ENCODE measurements at regions of chr6 and their contacts with region 1.

Region 1: GRCh38 chr6:36678518-36679027 is at the start of gene CDKN1A:
- DNase-seq: peak; percentile 87
- ATAC-seq: peak; percentile 87
- H3K4me3 ChIP-seq: peak within 1 kb of the TSS; percentile 73 to 99 (median 94)
- H3K27ac ChIP-seq: peak within 1 kb of the TSS; percentile 92
- H3K4me1 ChIP-seq: peaks cover 76% of the 10 kb centered on the region
- H3K27me3 ChIP-seq: peaks cover 0 to 6% of the 10 kb centered on the region in 2 experiments; a peak in 1 of 5 replicates
- CTCF ChIP-seq: peak; percentile 7; the same call in 1 of the 2 replicates
- EP300 ChIP-seq: peak; percentile 10 to 61; a peak in 3 of 4 replicates
- POLR2A ChIP-seq: peak in 1 of 2 experiments; percentile 98; a peak in 2 of 4 replicates
- RAD21 ChIP-seq: no peak; the same call in 1 of the 2 replicates
- total RNA-seq, gene CDKN1A: 56.0 and 60.7 TPM in 2 replicates

Region 2: GRCh38 chr6:36594029-36594815 is 84.4 kb before region 1 on chr6 and contains the start of gene SRSF3:
- CTCF ChIA-PET with region 1: no interaction called
- POLR2A ChIA-PET with region 1: interaction called, 10 read pairs
- in situ Hi-C with region 1: no loop called
- intact Hi-C with region 1: no loop called
- DNase-seq: peak; percentile 98
- ATAC-seq: peak; percentile 92
- H3K4me3 ChIP-seq: peak within 1 kb of the TSS; percentile 87 to 97 (median 92)
- H3K27ac ChIP-seq: peak within 1 kb of the TSS; percentile 93
- H3K4me1 ChIP-seq: peaks cover 50% of the 10 kb centered on the region
- H3K27me3 ChIP-seq: no peaks in the 10 kb centered on the region; a peak in 1 of 5 replicates
- CTCF ChIP-seq: peak; percentile 82
- EP300 ChIP-seq: peak in 1 of 2 experiments; percentile 56; a peak in 3 of 4 replicates
- POLR2A ChIP-seq: peak; percentile 100
- RAD21 ChIP-seq: peak; percentile 64
- total RNA-seq, gene SRSF3: 684 and 1,115 TPM in 2 replicates

Region 3: GRCh38 chr6:36623547-36624459 is 54.8 kb before region 1 on chr6:
- CTCF ChIA-PET with region 1: interaction called, 39 read pairs
- POLR2A ChIA-PET with region 1: interaction called, 32 read pairs
- in situ Hi-C with region 1: loop called (anchors 5 kb)
- intact Hi-C with region 1: loop called (anchors 1 kb)
- DNase-seq: peak; percentile 77
- ATAC-seq: peak; percentile 78
- H3K4me3 ChIP-seq: no peak overlapping the region; a peak in 2 of 6 replicates
- H3K27ac ChIP-seq: no peak overlapping the region
- H3K4me1 ChIP-seq: peaks cover 30% of the 10 kb centered on the region
- H3K27me3 ChIP-seq: peaks cover 0 to 29% of the 10 kb centered on the region in 2 experiments; a peak in 2 of 5 replicates
- CTCF ChIP-seq: peak; percentile 98
- EP300 ChIP-seq: peak in 1 of 2 experiments; percentile 17; a peak in 1 of 4 replicates
- POLR2A ChIP-seq: no peak
- RAD21 ChIP-seq: peak; percentile 97

Region 4: GRCh38 chr6:36642913-36643817 is 35.4 kb before region 1 on chr6:
- CTCF ChIA-PET with region 1: interaction called, 4 read pairs
- POLR2A ChIA-PET with region 1: interaction called, 109 read pairs
- in situ Hi-C with region 1: no loop called
- intact Hi-C with region 1: loop called (anchors 2 kb)
- DNase-seq: peak; percentile 88
- ATAC-seq: peak; percentile 97
- H3K4me3 ChIP-seq: peak overlapping the region; percentile 14 to 70 (median 39)
- H3K27ac ChIP-seq: peak overlapping the region; percentile 61
- H3K4me1 ChIP-seq: peaks cover 57% of the 10 kb centered on the region
- H3K27me3 ChIP-seq: 0 out of 5 replicates have a peak, but pooled peaks cover 0 to 6% of the 10 kb centered on the region in 2 experiments
- CTCF ChIP-seq: no peak; the same call in 1 of the 2 replicates
- EP300 ChIP-seq: no peak
- POLR2A ChIP-seq: 0 out of 4 replicates have a peak, but pooled peaks of 1 of the 2 experiments have one; percentile 25
- RAD21 ChIP-seq: no peak

Region 5: GRCh38 chr6:36666726-36667591 is 11.6 kb before region 1 on chr6:
- CTCF ChIA-PET with region 1: no interaction called
- POLR2A ChIA-PET with region 1: interaction called, 383 read pairs
- in situ Hi-C with region 1: no loop called
- intact Hi-C with region 1: no loop called
- DNase-seq: peak; percentile 93
- ATAC-seq: peak; percentile 90
- H3K4me3 ChIP-seq: no peak overlapping the region
- H3K27ac ChIP-seq: peak overlapping the region; percentile 77
- H3K4me1 ChIP-seq: peaks cover 89% of the 10 kb centered on the region
- H3K27me3 ChIP-seq: peaks cover 0 to 9% of the 10 kb centered on the region in 2 experiments; a peak in 2 of 5 replicates
- CTCF ChIP-seq: peak; percentile 55
- EP300 ChIP-seq: peak; percentile 36 to 80; a peak in 2 of 4 replicates
- POLR2A ChIP-seq: peak; percentile 43 to 66; a peak in 2 of 4 replicates
- RAD21 ChIP-seq: 0 out of 2 replicates have a peak, but pooled peaks have one; percentile 31

Region 6: DNA sequence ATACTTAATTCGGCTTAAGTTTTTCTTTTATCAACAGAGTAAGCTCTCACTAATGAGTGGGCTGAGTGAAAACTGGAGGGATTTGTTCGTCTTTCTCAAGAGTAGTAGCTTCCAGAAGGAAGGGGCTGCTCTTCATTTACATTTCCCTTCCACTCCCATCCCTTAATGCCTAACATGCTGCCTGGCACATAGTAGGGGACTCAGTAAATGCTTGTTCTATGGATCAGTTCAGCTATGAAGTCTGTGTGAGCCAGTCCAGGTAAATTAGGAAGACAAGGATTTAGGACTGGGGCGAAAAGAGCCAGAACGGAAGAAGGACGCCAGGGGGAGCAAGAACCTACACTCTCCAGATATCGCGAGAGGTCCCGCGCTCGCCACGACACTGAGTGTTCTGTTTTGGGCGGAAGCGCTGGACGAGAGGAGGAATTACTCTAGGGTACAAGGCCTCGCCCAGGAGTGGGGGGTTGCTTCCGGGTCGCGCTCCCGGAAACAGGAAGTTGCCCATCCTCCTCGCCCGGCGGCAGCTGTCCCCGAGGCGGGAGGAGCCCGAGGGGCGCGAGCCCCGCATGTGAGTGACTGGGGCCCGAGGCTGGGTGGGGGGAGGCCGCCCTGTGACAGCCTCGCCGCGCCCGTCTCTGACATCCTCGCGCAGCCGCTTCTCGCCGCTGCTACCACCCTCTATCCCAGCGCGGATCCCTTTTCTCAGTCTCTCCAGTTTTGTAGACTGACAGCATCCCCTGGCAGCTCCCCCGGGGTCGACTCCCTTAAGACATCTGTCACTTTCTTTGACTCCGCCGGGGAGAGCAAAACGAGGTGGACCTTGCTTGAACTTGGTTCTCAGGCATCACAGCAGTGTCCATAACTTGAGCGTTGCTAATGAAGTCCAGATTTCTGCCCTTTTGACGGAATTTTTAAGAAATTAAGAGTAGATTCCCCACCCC is 207.2 kb after region 1 on chr6 and contains the start of gene C6orf89:
- CTCF ChIA-PET with region 1: no interaction called
- POLR2A ChIA-PET with region 1: no interaction called
- in situ Hi-C with region 1: no loop called
- intact Hi-C with region 1: loop called (anchors 10 kb)
- DNase-seq: peak; percentile 99
- ATAC-seq: peak; percentile 99
- H3K4me3 ChIP-seq: peak within 1 kb of the TSS; percentile 77 to 82 (median 77)
- H3K27ac ChIP-seq: peak within 1 kb of the TSS; percentile 74
- H3K4me1 ChIP-seq: peaks cover 15% of the 10 kb centered on the region
- H3K27me3 ChIP-seq: no peaks in the 10 kb centered on the region; a peak in 2 of 5 replicates
- CTCF ChIP-seq: peak; percentile 98
- EP300 ChIP-seq: peak in 1 of 2 experiments; percentile 55; a peak in 2 of 4 replicates
- POLR2A ChIP-seq: peak; percentile 42 to 63; a peak in 3 of 4 replicates
- RAD21 ChIP-seq: peak; percentile 63; the same call in 1 of the 2 replicates
- total RNA-seq, gene C6orf89: 23.9 and 32.2 TPM in 2 replicates

Region 7: DNA sequence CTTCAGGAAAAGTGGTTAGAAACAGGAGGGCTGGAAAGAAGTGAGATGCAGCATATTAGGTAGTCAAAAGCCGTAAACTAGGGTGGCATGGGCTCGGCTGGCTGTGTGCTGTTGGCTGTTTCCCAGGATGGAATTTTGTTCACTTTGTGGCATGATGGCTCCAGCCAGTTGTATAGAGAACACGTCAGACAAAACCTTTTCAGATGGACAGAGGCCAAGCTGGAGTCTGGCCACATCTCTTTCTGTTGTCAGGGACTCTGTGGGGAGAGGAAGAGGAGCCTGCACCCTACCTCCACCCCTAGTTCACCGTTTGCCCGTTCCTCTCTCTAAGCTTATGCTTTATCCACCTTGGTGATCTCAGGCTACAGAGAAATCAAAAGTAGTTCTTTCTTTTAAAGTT is 229.2 kb after region 1 on chr6:
- CTCF ChIA-PET with region 1: no interaction called
- POLR2A ChIA-PET with region 1: no interaction called
- in situ Hi-C with region 1: no loop called
- intact Hi-C with region 1: no loop called
- DNase-seq: no peak
- ATAC-seq: no peak
- H3K4me3 ChIP-seq: no peak overlapping the region
- H3K27ac ChIP-seq: no peak overlapping the region
- H3K4me1 ChIP-seq: no peaks in the 10 kb centered on the region
- H3K27me3 ChIP-seq: no peaks in the 10 kb centered on the region
- CTCF ChIP-seq: no peak
- EP300 ChIP-seq: no peak
- POLR2A ChIP-seq: no peak
- RAD21 ChIP-seq: no peak

Region 8: GRCh38 chr6:37679539-37680476 is 1001.2 kb after region 1 on chr6:
- CTCF ChIA-PET with region 1: no interaction called
- POLR2A ChIA-PET with region 1: no interaction called
- in situ Hi-C with region 1: no loop called
- intact Hi-C with region 1: no loop called
- DNase-seq: no peak
- ATAC-seq: no peak
- H3K4me3 ChIP-seq: no peak overlapping the region
- H3K27ac ChIP-seq: no peak overlapping the region
- H3K4me1 ChIP-seq: no peaks in the 10 kb centered on the region
- H3K27me3 ChIP-seq: peaks cover 2 to 60% of the 10 kb centered on the region in 2 experiments; a peak in 4 of 5 replicates
- CTCF ChIP-seq: no peak
- EP300 ChIP-seq: no peak
- POLR2A ChIP-seq: no peak
- RAD21 ChIP-seq: no peak